Left lung (tissue), 14 donors: ENCODE measurements at regions of chr15 and their contacts with region 1.

Region 1: DNA sequence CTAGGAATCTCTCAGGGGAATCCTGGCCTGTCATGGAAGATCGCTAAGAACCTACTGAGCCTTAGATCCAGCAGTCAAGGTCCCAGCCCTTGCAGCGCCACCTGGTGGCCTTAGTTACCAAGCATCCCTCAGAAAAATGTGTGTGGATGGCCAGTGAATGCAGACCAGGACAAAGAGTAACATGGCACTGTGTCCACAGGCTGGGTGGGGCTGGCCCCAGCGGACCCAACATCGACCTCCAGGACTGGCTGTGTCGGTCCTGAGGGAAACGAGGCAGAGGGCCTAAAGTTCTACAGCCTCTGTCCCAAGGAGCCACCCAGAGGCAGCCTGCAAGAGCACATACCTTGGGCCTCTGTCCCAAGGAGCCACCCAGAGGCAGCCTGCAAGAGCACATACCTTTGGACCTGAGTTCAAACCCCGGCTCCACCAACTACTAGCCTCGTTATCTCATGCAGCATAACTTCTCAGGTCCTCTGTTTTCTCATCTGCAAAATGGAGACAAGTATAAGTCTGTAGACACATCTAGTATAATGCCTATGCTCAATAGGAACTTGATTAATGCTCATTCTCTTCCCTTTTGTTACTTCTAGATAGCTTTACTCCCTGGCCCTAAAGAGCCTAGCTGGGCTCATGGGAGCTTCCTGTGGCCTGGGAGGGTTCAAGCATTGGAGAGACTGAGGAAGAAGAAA is 57.5 kb upstream of the HERC1 start:
- DNase-seq: peak; percentile 41 to 92 (median 70)
- ATAC-seq: peak; percentile 87
- H3K4me3 ChIP-seq: no peak overlapping the region
- H3K27ac ChIP-seq: no peak overlapping the region
- H3K4me1 ChIP-seq: peaks cover 0 to 58% of the 10 kb centered on the region in 2 donors
- H3K27me3 ChIP-seq: no peaks in the 10 kb centered on the region
- CTCF ChIP-seq: peak; percentile 83 to 86

Region 2: GRCh38 chr15:63752075-63752684 is 139.0 kb before region 1 on chr15:
- intact Hi-C with region 1: loop called in 1 of 2 experiments (anchors 5 kb)
- DNase-seq: peak in 2 of 4 donors; percentile 36 to 60
- ATAC-seq: peak; percentile 96
- H3K4me3 ChIP-seq: no peak overlapping the region
- H3K27ac ChIP-seq: no peak overlapping the region
- H3K4me1 ChIP-seq: no peaks in the 10 kb centered on the region
- H3K27me3 ChIP-seq: no peaks in the 10 kb centered on the region
- CTCF ChIP-seq: peak; percentile 55 to 56